ENCODE measurements at regions of chr14 and their contacts with region 1.

Region 1: DNA sequence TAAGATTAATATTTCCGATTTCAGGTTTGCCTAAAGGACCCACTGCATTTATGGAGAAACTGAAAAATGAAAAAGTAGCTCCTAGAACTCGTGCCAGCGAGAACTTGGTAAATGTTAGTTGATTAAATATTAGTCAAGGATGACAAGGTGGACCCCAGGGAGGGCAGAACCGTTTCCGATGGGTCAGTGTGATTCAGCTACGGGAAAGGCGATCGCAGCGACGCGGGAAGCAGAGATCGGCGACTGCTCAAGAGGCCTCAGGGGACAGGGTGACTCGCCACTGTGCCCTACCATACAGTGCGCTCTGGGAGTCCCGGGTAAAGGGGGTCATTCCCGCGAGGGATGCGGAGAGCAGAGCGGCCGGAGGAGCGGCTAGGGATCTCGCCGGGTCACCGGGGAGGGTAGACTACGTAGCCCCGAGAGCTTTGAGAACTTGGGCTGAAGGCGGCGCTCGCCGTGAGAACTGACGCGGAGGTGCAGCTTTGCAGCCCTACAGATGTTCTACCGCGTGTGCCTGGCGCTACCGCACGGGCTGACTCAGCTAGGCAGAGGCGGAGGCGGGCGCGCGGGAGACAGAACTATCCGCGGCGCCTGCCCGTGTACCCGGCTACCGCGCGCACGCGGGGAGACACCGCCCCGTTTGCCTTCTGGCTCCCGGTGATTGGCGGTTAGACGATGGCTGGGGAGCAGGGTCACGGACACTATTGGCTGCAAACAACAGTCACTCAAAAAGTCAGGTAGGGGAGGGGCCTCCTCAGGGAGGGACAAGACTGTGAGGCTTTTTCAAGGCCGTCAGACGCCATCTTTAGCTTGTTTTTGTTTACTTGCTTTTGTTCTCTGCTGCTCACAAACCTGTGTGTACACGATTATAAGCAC is 3.2 kb downstream of the C14orf93 start:
- DNase-seq: peak; percentile 98
- H3K4me3 Mint-ChIP-seq: peak overlapping the region; percentile 97
- H3K27ac Mint-ChIP-seq: peak overlapping the region; percentile 97
- H3K4me1 Mint-ChIP-seq: peaks cover 52% of the 10 kb centered on the region
- H3K27me3 Mint-ChIP-seq: no peaks in the 10 kb centered on the region

Region 2: DNA sequence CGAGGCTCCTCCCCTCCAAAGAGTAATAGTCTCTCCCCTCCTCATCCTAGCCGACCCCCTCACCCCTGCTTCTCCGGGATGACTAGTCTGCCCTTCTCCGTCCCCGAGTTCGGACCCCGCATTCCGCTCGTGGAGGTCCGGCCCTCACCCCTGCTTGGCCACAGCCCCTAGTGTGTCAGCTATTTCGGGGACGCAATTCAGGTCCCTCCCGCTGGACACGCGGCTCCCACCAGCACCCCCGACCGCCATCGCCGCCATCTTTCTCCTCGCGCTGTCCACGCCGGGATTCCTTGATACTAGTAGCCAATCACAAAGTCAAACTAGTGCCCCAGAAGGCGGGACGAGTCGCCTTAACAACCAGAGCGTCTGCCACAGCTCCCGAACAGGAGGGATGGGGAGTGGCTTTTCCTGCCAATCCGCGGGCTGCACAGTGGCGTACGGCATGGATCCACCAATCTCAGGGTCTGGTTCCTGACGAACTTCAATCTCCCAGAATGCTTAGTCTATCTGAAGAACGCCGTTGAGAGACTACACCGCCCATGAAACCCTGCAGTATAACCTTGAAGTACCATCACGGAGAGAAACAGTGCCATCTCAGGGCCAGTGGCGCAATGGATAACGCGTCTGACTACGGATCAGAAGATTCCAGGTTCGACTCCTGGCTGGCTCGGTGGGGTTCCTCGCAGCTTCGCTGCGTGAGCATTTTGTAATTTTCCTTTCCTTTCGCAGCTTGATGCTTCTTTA is 77.5 kb before region 1 on chr14 and contains the start of gene PRMT5:
- intact Hi-C with region 1: loop called (anchors 1 kb)
- DNase-seq: peak; percentile 95
- H3K4me3 Mint-ChIP-seq: no peak within 1 kb of the TSS
- H3K27ac Mint-ChIP-seq: no peak within 1 kb of the TSS
- H3K4me1 Mint-ChIP-seq: peaks cover 32% of the 10 kb centered on the region
- H3K27me3 Mint-ChIP-seq: no peaks in the 10 kb centered on the region
- total RNA-seq, gene PRMT5: 174 and 180 TPM in 2 replicates

Region 3: GRCh38 chr14:22986508-22987054 is 20.2 kb before region 1 on chr14:
- intact Hi-C with region 1: loop called (anchors 1 kb)
- DNase-seq: peak; percentile 79
- H3K4me3 Mint-ChIP-seq: no peak overlapping the region
- H3K27ac Mint-ChIP-seq: no peak overlapping the region
- H3K4me1 Mint-ChIP-seq: no peaks in the 10 kb centered on the region
- H3K27me3 Mint-ChIP-seq: peaks cover 3% of the 10 kb centered on the region

Region 4: GRCh38 chr14:23034483-23035302 is 27.9 kb after region 1 on chr14 and contains the start of gene PSMB5:
- intact Hi-C with region 1: loop called (anchors 1 kb)
- DNase-seq: peak; percentile 85
- H3K4me3 Mint-ChIP-seq: peak within 1 kb of the TSS; percentile 98
- H3K27ac Mint-ChIP-seq: peak within 1 kb of the TSS; percentile 98
- H3K4me1 Mint-ChIP-seq: peaks cover 28% of the 10 kb centered on the region
- H3K27me3 Mint-ChIP-seq: peaks cover 2% of the 10 kb centered on the region
- total RNA-seq, gene PSMB5: 144 and 148 TPM in 2 replicates

Region 5: GRCh38 chr14:23286020-23286905 is 279.5 kb after region 1 on chr14 and contains the start of gene HOMEZ:
- intact Hi-C with region 1: loop called (anchors 2 kb)
- DNase-seq: peak; percentile 98
- H3K4me3 Mint-ChIP-seq: peak within 1 kb of the TSS; percentile 99
- H3K27ac Mint-ChIP-seq: peak within 1 kb of the TSS; percentile 95
- H3K4me1 Mint-ChIP-seq: peaks cover 26% of the 10 kb centered on the region
- H3K27me3 Mint-ChIP-seq: no peaks in the 10 kb centered on the region
- total RNA-seq, gene HOMEZ: 10.9 and 12.2 TPM in 2 replicates

Measured in activated T-helper 1 cell treated with anti-CD3 and anti-CD28 coated beads, Interleukin-12 subunit alpha, Interleukin-12 subunit beta, Interleukin-2, Interleukin-4 antibody, amounts not matched to agents 30 ng/mL and 10 ng/mL and 1 ng/mL, durations not matched to agents 14 hours and 24 hours and 36 hours (primary cell).